ENCODE measurements at regions of chr15 and their contacts with region 1.

Region 1: DNA sequence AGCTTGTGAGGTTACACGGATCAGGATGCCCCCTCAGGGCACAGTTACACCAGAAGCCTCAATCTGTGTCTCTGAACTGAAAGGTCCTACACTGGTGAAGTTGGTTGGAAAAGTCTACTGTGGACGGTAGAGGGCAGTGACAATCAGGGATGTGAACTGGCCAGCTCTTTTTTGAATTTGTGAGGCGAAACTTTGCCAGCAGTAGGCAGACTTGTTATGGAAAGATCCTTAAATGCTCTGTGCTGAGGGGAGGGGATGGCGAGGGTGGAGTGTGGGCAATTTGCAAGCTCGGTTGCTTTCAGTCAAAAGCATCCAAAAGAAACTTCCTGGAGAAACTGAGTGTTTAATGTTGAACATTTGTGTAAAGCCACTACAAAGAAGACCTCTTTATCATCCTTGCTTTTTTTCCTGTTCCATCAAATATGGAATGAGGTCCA is 127.4 kb upstream of the ABHD17C start:
- DNase-seq: peak; percentile 76
- H3K4me3 Mint-ChIP-seq: no peak overlapping the region
- H3K27ac Mint-ChIP-seq: no peak overlapping the region
- H3K4me1 Mint-ChIP-seq: peaks cover 7% of the 10 kb centered on the region
- H3K27me3 Mint-ChIP-seq: peaks cover 16% of the 10 kb centered on the region
- CTCF ChIP-seq: peak; percentile 75

Region 2: GRCh38 chr15:80455668-80456442 is 111.9 kb before region 1 on chr15:
- CTCF ChIA-PET with region 1: interaction called, 3 read pairs
- intact Hi-C with region 1: loop called (anchors 1 kb)
- DNase-seq: peak; percentile 75
- H3K4me3 Mint-ChIP-seq: peak overlapping the region; percentile 24
- H3K27ac Mint-ChIP-seq: no peak overlapping the region
- H3K4me1 Mint-ChIP-seq: peaks cover 26% of the 10 kb centered on the region
- H3K27me3 Mint-ChIP-seq: peaks cover 9% of the 10 kb centered on the region
- CTCF ChIP-seq: peak; percentile 90

Region 3: DNA sequence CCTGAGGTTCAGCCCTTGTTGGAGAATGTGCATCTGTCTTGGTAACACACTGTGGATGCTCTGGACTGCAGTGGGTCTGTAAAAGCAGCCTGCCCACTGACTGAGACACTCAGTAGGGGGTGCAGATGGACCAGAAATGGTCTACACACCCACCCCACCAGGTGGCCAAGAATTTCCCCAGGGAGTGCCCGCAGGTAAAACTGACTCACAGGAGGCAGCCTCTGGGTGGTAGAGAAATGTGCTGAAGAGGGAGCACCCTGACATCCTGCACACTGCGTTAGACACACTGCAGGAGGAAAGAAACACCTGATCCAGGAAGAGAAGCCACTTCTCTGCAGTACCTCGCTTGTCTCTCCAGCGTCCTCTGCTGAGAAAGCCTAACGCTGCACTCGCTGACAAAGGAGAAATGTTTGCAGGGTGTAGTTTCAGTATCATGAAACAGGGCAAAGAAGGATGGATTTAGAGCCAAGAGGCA is 17.8 kb after region 1 on chr15:
- CTCF ChIA-PET with region 1: interaction called, 5 read pairs
- intact Hi-C with region 1: loop called (anchors 1 kb)
- DNase-seq: peak; percentile 77
- H3K4me3 Mint-ChIP-seq: no peak overlapping the region
- H3K27ac Mint-ChIP-seq: peak overlapping the region; percentile 65
- H3K4me1 Mint-ChIP-seq: peaks cover 57% of the 10 kb centered on the region
- H3K27me3 Mint-ChIP-seq: no peaks in the 10 kb centered on the region
- CTCF ChIP-seq: peak; percentile 50

Region 4: GRCh38 chr15:80615761-80616391 is 48.1 kb after region 1 on chr15:
- CTCF ChIA-PET with region 1: interaction called, 4 read pairs
- intact Hi-C with region 1: loop called (anchors 2 kb)
- DNase-seq: peak; percentile 68
- H3K4me3 Mint-ChIP-seq: no peak overlapping the region
- H3K27ac Mint-ChIP-seq: no peak overlapping the region
- H3K4me1 Mint-ChIP-seq: peaks cover 22% of the 10 kb centered on the region
- H3K27me3 Mint-ChIP-seq: no peaks in the 10 kb centered on the region
- CTCF ChIP-seq: no peak

Region 5: DNA sequence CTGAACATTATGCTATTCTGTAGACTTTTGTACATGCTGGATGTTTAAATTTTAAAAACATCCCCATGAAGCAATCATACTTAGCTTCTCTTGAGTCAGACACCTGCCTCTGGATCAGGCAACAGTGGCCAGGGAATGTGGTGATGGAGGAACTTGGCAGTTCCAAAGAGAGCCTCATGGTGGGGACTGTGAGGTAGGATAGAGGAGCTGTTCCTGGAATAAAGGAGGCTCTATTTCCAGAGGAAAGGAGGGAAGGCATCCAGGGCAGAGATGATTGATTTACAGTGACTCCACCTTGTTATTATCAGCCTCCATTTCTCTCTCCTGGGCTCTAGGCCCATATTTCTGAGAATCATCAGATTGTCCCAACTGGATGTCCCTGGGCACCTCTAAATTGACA is 92.4 kb after region 1 on chr15:
- CTCF ChIA-PET with region 1: interaction called, 12 read pairs
- intact Hi-C with region 1: loop called (anchors 5 kb)
- DNase-seq: peak; percentile 66
- H3K4me3 Mint-ChIP-seq: no peak overlapping the region
- H3K27ac Mint-ChIP-seq: no peak overlapping the region
- H3K4me1 Mint-ChIP-seq: peaks cover 48% of the 10 kb centered on the region
- H3K27me3 Mint-ChIP-seq: no peaks in the 10 kb centered on the region
- CTCF ChIP-seq: peak; percentile 35

Region 6: GRCh38 chr15:80856809-80857377 is 289.2 kb after region 1 on chr15:
- CTCF ChIA-PET with region 1: interaction called, 9 read pairs
- intact Hi-C with region 1: loop called (anchors 2 kb)
- DNase-seq: peak; percentile 65
- H3K4me3 Mint-ChIP-seq: no peak overlapping the region
- H3K27ac Mint-ChIP-seq: peak overlapping the region; percentile 0
- H3K4me1 Mint-ChIP-seq: peaks cover 40% of the 10 kb centered on the region
- H3K27me3 Mint-ChIP-seq: peaks cover 18% of the 10 kb centered on the region
- CTCF ChIP-seq: no peak

Measured in Calu3 (cell line).